ENCODE measurements at regions of chr4 and their contacts with region 1.

Region 1: DNA sequence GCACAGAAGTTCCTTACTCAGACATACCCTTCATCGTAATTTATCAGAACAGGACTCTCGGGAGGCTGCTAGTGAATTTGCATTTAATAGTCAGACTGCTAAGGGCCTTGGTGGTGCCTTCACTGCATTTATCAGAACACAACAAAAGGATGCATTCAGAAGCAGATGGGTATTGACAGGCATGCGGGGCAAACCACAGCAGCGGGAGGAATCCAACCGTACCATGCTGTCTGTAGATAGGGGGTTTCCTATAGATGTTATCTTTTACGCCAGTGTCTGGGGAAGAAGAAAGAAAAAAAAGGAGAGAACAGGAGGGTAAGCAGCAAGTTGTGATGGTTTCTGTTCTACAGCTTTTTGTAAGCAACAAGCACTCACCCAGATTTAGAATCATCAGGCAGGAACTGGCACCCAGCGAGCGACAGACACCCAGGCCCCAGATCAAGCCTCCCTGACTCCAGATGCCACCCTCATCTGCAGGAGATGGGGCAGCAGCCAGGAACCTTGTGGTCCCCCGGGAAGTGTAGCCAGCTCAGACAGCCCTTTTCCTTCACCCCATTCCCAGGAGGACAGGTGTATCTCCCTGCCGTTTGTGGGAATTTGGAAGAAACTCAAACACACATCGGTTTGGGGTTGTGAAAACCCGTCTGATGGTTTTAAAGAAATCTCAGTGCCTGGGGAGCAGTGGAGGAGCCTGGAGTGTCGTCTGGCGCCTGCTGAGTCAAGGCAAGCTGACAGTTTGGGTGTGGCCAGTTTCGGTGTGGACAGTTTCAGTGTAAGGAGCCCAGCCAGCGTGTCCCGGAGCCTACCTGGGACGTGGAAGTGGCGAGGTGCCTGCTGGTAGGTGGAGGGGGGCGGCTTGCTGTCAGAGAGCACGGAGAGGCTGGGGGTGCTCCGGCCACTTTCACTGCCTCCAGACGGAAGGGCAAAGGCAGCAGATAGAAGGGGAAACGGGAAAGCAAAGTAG is 80.0 kb upstream of the AFAP1 start:
- DNase-seq: peak in 3 of 10 donors; percentile 32 to 52 (median 50)

Region 2: GRCh38 chr4:8158710-8159536 is 139.2 kb after region 1 on chr4 and contains the start of gene ABLIM2:
- intact Hi-C with region 1: loop called (anchors 10 kb)
- DNase-seq: peak; percentile 97 to 100 (median 99)